H1 (cell line): ENCODE measurements at regions of chr10 and their contacts with region 1.

Region 1: GRCh38 chr10:69290993-69291392 is 12.7 kb downstream of the HK1 start:
- DNase-seq: no peak
- H3K4me3 ChIP-seq: no peak overlapping the region
- H3K27ac ChIP-seq: no peak overlapping the region
- H3K4me1 ChIP-seq: no peaks in the 10 kb centered on the region; a peak in 1 of 7 replicates
- H3K27me3 ChIP-seq: no peaks in the 10 kb centered on the region
- CTCF ChIP-seq: no peak
- EP300 ChIP-seq: no peak
- POLR2A ChIP-seq: no peak
- RAD21 ChIP-seq: no peak

Region 2: GRCh38 chr10:69130251-69130650 is 160.7 kb before region 1 on chr10:
- CTCF ChIA-PET with region 1: no interaction called
- POLR2A ChIA-PET with region 1: no interaction called
- DNase-seq: no peak
- H3K4me3 ChIP-seq: no peak overlapping the region
- H3K27ac ChIP-seq: no peak overlapping the region
- H3K4me1 ChIP-seq: no peaks in the 10 kb centered on the region
- H3K27me3 ChIP-seq: no peaks in the 10 kb centered on the region
- CTCF ChIP-seq: no peak
- EP300 ChIP-seq: no peak
- POLR2A ChIP-seq: no peak
- RAD21 ChIP-seq: no peak

Region 3: GRCh38 chr10:69268761-69269416 is 22.1 kb before region 1 on chr10:
- CTCF ChIA-PET with region 1: no interaction called
- POLR2A ChIA-PET with region 1: no interaction called
- DNase-seq: no peak
- H3K4me3 ChIP-seq: no peak overlapping the region
- H3K27ac ChIP-seq: no peak overlapping the region
- H3K4me1 ChIP-seq: no peaks in the 10 kb centered on the region
- H3K27me3 ChIP-seq: no peaks in the 10 kb centered on the region
- CTCF ChIP-seq: no peak
- EP300 ChIP-seq: no peak
- POLR2A ChIP-seq: no peak
- RAD21 ChIP-seq: no peak

Region 4: DNA sequence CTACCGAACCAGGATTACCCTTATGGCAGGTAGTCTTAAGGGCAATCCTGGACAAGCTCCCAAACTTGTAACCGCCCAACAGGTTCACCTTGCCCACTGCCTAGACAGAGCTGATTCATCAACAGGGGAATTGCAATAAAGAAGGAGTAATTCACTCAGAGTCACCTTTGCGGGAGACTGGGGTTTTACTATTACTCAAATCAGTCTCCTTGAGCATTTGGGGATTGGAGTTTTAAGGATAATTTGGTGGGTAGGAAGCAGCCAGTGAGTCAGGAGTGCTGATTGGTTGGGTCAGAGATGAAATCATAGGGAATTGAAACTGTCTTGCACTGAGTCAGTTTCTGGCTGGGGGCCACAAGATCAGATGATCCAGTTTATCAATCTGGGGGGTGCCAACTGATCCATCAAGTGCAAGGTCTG is 12.6 kb after region 1 on chr10:
- CTCF ChIA-PET with region 1: interaction called, 14 read pairs
- POLR2A ChIA-PET with region 1: no interaction called
- DNase-seq: no peak
- H3K4me3 ChIP-seq: no peak overlapping the region
- H3K27ac ChIP-seq: no peak overlapping the region
- H3K4me1 ChIP-seq: no peaks in the 10 kb centered on the region
- H3K27me3 ChIP-seq: no peaks in the 10 kb centered on the region
- CTCF ChIP-seq: no peak
- EP300 ChIP-seq: no peak
- POLR2A ChIP-seq: no peak
- RAD21 ChIP-seq: no peak